ENCODE measurements at regions of chr9 and their contacts with region 1.

Region 1: GRCh38 chr9:35954942-35955546 is 2.9 kb downstream of the OR2S2 start:
- DNase-seq: peak in 1 of 2 donors; percentile 65
- H3K4me3 ChIP-seq: no peak overlapping the region
- CTCF ChIP-seq: peak in 1 of 3 donors; percentile 30
- POLR2A ChIP-seq: no peak

Region 2: GRCh38 chr9:35350827-35351549 is 604.1 kb before region 1 on chr9:
- intact Hi-C with region 1: no loop called
- DNase-seq: no peak
- H3K4me3 ChIP-seq: no peak overlapping the region
- CTCF ChIP-seq: no peak
- POLR2A ChIP-seq: no peak

Region 3: GRCh38 chr9:36023260-36024048 is 68.4 kb after region 1 on chr9:
- intact Hi-C with region 1: loop called (anchors 5 kb)
- DNase-seq: peak; percentile 59 to 88
- H3K4me3 ChIP-seq: no peak overlapping the region
- CTCF ChIP-seq: no peak
- POLR2A ChIP-seq: no peak